ENCODE measurements at regions of chr9 and their contacts with region 1.

Region 1: DNA sequence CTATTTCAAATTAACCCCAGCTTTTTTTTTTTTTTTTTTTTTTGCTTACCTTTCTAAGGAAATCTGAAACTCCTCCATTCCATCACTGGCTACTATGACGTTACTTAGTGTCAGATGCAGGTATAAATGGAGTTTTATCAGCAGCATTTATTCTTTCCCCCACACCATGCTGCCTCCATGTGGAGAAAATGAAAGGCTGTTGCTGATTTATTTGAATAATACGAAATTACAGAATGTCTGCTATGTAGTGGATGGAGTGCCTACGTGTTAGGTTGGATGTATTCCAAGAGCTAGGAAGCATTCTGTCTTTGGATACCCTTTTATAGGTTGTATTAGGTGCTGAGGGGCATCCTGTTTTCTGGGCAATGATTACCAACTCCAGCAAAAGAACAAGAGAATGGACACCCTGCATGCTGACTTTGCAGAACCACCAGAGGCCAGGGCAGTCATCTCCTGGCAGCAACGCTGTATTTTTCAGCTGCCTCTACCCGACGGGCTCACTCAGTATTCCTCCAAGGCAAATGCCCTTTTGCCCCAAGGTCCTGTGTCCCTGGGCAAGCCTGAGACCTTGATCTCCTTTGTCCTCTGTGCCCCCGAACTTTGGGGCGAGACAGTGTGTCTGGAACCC is 199.5 kb downstream of the ALDH1A1 start:
- DNase-seq: peak in 1 of 10 donors; percentile 54

Region 2: DNA sequence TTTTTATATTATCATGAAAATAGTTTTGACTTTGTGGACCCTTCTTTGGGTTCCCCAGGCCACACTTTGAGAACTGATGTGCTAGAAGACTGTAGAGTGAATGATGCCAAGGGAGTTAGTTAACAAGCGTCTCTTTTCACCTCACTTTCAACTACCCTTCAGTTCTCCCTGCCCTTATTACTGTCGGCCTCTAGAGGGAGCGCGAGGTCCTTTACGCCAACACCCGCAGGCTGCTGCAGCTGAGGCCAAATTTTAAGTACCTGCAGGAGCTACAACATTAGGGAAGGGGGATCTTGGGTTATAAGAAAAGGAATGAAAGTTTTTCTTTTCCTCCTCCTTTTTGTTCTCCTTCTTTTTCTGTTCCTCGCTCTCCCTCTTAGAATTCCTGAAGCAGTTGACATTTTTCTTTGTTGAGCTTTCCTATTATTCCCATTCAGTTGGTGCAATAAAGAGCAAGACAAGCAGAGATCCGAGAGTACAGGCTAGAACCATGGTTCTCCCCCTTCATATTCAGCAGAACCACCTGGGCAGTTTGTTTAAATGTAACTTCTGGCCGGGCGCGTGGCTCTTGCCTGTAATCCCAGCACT is 472.4 kb before region 1 on chr9:
- intact Hi-C with region 1: loop called (anchors 5 kb)
- DNase-seq: peak; percentile 37 to 95 (median 74)

Measured in posterior cingulate gyrus (tissue), 11 donors.